Psoas muscle (tissue), 8 donors: ENCODE measurements at regions of chr7 and their contacts with region 1.

Region 1: DNA sequence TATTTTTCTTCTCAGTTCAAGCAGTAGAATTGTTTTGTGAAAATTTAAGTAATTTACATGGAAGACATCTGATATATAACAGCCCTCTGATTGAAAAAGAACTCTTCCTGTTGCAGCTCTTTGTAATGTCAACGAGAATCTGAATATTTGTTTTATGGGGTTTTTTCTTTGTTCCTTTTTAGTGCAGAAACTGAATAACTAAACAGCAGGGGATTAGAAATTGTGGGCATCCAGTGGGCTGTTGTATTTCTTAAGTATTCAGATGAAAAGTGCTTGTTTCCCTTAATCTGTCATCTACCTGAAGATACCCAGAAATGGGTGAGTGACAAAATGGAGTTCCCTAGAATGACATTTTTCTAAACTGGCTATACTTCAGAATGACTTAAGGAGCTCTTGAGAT is 7.4 kb downstream of the ARL4A start:
- DNase-seq: no peak
- ATAC-seq: no peak
- H3K4me3 ChIP-seq: no peak overlapping the region
- H3K27ac ChIP-seq: no peak overlapping the region
- H3K4me1 ChIP-seq: no peaks in the 10 kb centered on the region
- H3K27me3 ChIP-seq: no peaks in the 10 kb centered on the region
- CTCF ChIP-seq: no peak

Region 2: GRCh38 chr7:12772768-12773167 is 78.0 kb after region 1 on chr7:
- intact Hi-C with region 1: loop called in 1 of 2 experiments (anchors 1 kb)
- DNase-seq: no peak
- ATAC-seq: no peak
- H3K4me3 ChIP-seq: no peak overlapping the region
- H3K27ac ChIP-seq: no peak overlapping the region
- H3K4me1 ChIP-seq: peaks cover 10% of the 10 kb centered on the region
- H3K27me3 ChIP-seq: no peaks in the 10 kb centered on the region
- CTCF ChIP-seq: no peak